ENCODE measurements at regions of chr10 and their contacts with region 1.

Region 1: GRCh38 chr10:70283445-70284399 is at the start of gene NPFFR1:
- DNase-seq: no peak
- ATAC-seq: peak in 3 of 4 donors; percentile 41 to 70 (median 53)
- H3K4me3 ChIP-seq: peak within 1 kb of the TSS in 11 of 12 donors; percentile 14 to 49 (median 39)
- H3K27ac ChIP-seq: no peak within 1 kb of the TSS
- H3K4me1 ChIP-seq: peaks cover 0 to 25% (median 6%) of the 10 kb centered on the region in 12 donors
- H3K27me3 ChIP-seq: peaks cover 5 to 46% (median 32%) of the 10 kb centered on the region in 9 donors
- CTCF ChIP-seq: peak in 4 of 12 donors; percentile 16 to 32 (median 22)
- POLR2A ChIP-seq: no peak
- total RNA-seq, gene NPFFR1: 0.52 TPM in 1 of 9 donors, not detected in the others

Region 2: DNA sequence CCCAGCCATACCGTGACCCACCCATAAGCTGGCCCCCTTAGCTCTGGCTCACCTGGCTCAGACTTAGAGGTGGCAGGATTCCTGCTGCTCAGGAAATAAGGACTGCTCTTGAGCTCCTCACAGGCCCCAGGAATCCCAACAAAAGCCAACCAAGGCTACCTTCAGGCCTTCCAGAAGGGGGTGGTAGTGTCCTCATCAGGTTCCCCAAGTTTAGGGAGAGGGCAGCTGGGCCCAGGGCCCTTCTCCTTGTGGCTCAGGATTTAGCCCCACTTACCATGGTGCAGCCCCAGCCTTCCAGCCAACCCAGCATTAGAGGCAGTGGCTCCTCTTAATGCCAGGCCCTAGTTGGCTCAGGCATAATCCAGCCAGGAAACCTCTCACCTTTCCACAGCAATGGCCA is 23.5 kb before region 1 on chr10:
- intact Hi-C with region 1: no loop called
- DNase-seq: no peak
- ATAC-seq: no peak
- H3K4me3 ChIP-seq: no peak overlapping the region
- H3K27ac ChIP-seq: no peak overlapping the region
- H3K4me1 ChIP-seq: peaks cover 0 to 10% (median 4%) of the 10 kb centered on the region in 12 donors
- H3K27me3 ChIP-seq: peaks cover 6 to 47% (median 12%) of the 10 kb centered on the region in 9 donors
- CTCF ChIP-seq: no peak
- POLR2A ChIP-seq: no peak

Region 3: DNA sequence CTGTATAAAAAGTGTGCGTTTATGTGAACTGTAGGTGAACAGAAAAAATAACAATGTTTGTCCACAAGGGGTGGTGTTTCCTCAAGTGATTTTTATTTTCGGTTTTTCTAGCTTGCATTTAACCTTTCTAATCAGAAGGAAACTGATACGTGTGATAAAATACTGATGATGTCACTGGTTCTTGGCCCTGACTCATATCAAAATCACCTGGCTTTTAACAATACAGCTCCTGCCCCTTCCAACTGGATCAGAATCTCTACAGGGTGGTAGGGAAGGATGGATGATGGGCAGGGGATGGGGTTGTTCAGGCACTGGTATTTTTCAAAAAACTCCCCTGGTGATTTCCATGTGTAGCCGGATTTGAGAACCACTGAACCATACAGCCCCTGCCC is 10.8 kb before region 1 on chr10:
- intact Hi-C with region 1: no loop called
- DNase-seq: no peak
- ATAC-seq: peak in 2 of 4 donors; percentile 16 to 45
- H3K4me3 ChIP-seq: no peak overlapping the region
- H3K27ac ChIP-seq: no peak overlapping the region
- H3K4me1 ChIP-seq: peaks cover 0 to 16% (median 5%) of the 10 kb centered on the region in 12 donors
- H3K27me3 ChIP-seq: no peaks in the 10 kb centered on the region
- CTCF ChIP-seq: peak; percentile 29 to 64 (median 54)
- POLR2A ChIP-seq: no peak

Region 4: DNA sequence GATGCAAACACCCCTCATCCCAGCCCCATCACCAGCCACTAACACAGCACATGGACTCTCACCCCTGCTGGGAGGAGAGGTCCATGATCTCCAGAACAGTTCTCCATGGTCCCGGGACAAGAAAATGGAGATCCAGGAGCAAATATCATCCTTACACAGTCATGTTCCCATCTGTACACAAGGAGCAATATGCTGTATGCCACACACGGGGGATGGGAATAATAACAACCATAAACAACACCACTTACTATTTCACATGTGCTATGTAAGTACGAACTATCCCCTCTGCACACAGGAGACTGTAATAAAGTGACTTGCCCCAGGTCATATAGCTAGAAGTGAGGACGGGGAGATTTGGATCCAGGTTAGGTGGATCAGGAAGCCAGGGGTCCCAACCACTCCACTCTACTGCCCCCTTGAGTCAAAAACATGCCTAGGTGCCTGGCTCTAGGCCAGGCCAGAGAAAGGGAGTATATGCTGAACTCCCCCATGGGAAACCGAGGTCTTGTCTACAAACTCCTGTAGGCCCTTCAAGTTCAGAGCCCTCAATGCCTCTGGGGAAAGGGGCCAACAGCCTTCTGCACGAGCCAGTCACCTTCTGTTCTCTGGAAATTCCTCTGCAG is 64.6 kb after region 1 on chr10:
- intact Hi-C with region 1: loop called in 2 of 10 experiments (anchors 5 to 10 kb)
- DNase-seq: peak in 1 of 5 donors; percentile 29
- ATAC-seq: peak in 3 of 4 donors; percentile 40 to 68 (median 67)
- H3K4me3 ChIP-seq: no peak overlapping the region
- H3K27ac ChIP-seq: no peak overlapping the region
- H3K4me1 ChIP-seq: peaks cover 0 to 23% (median 10%) of the 10 kb centered on the region in 12 donors
- H3K27me3 ChIP-seq: no peaks in the 10 kb centered on the region
- CTCF ChIP-seq: peak; percentile 29 to 65 (median 50)
- POLR2A ChIP-seq: no peak